ENCODE measurements at regions of chr7 and their contacts with region 1.

Region 1: DNA sequence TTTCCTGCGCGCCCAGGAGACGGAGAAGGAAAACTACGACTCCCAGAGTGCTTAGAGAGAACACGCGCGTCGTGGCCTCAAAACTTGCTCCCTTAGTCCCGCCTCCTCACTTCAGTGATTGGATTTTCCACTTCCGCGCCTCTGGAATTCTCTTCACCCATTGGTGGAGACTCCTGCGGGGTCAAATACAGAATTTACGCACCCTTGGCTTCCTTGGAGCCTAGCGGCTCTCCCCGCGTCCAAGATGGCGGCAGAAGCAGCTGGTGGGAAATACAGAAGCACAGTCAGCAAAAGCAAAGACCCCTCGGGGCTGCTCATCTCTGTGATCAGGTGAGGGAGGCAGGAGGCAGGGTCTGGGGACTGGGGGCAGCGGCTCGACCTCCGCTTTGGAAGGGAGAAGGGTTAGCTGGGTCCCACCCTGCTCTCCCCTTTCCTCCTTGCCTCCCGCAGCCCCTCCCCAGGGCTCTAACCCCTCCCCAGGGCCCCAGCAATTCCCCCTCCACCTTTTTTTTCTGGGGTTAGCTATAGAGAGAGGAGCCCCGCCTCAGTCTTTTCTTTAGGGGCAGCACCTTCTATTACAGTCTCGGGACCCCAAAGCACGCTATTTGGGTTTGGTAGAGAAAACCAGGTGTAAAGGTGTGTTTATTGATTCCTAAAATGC is at the start of gene EXOC4:
- DNase-seq: peak; percentile 82 to 88
- H3K4me3 ChIP-seq: peak within 1 kb of the TSS; percentile 59 to 95 (median 88)
- H3K27ac ChIP-seq: peak within 1 kb of the TSS; percentile 82
- H3K4me1 ChIP-seq: no peaks in the 10 kb centered on the region; a peak in 2 of 7 replicates
- H3K27me3 ChIP-seq: no peaks in the 10 kb centered on the region
- CTCF ChIP-seq: no peak
- EP300 ChIP-seq: no peak
- POLR2A ChIP-seq: peak; percentile 62 to 94
- RAD21 ChIP-seq: no peak
- total RNA-seq, gene EXOC4: 67.3 and 69.1 TPM in 2 replicates

Region 2: DNA sequence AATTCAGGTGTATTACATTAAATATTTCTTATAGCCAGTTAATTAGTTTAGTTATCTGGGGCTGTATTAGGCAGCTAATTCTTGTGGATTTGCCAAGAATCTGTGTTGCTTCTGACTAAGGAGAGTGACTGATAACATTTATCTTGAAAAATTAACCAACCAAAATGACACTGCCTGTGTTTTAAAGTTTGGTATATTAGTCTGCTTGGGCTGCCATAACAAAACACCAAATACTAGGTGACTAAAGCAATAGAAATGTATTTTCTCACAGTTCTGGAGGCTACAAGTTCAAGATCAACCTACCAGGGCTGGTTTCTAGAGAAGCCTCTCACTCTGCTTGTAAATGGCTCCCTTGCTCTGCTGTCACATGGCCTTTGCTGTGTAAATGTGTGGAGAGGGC is 12.8 kb after region 1 on chr7:
- CTCF ChIA-PET with region 1: interaction called, 3 read pairs
- POLR2A ChIA-PET with region 1: interaction called, 14 read pairs
- DNase-seq: no peak
- H3K4me3 ChIP-seq: no peak overlapping the region
- H3K27ac ChIP-seq: no peak overlapping the region
- H3K4me1 ChIP-seq: no peaks in the 10 kb centered on the region
- H3K27me3 ChIP-seq: no peaks in the 10 kb centered on the region
- CTCF ChIP-seq: no peak
- EP300 ChIP-seq: no peak
- POLR2A ChIP-seq: no peak
- RAD21 ChIP-seq: no peak

Region 3: GRCh38 chr7:133290041-133290440 is 37.1 kb after region 1 on chr7:
- CTCF ChIA-PET with region 1: no interaction called
- POLR2A ChIA-PET with region 1: no interaction called
- DNase-seq: no peak
- H3K4me3 ChIP-seq: no peak overlapping the region
- H3K27ac ChIP-seq: no peak overlapping the region
- H3K4me1 ChIP-seq: peaks cover 0 to 3% (median 1%) of the 10 kb centered on the region in 4 experiments; a peak in 1 of 7 replicates
- H3K27me3 ChIP-seq: no peaks in the 10 kb centered on the region
- CTCF ChIP-seq: no peak
- EP300 ChIP-seq: no peak
- POLR2A ChIP-seq: no peak
- RAD21 ChIP-seq: no peak

Region 4: DNA sequence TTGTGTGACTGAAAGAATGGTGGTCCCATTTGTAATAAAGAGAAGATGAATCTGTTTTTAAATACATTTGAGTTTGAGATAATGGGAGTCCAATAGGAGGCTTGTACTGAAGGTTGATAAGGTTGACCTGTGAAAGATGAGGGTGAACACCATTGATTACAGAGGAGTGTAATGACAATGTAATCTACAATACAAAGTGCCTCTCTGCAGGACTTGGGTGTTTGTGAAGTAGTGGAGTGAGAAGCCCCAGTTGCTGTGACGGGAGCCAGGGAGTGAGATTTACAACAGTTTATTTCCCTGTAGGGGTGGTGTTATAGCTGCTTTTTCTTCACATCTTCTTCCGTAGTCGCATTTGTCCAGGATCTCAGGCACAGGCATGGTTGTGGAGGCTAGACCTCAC is 189.8 kb after region 1 on chr7:
- CTCF ChIA-PET with region 1: no interaction called
- POLR2A ChIA-PET with region 1: no interaction called
- DNase-seq: no peak
- H3K4me3 ChIP-seq: no peak overlapping the region; a peak in 1 of 8 replicates
- H3K27ac ChIP-seq: no peak overlapping the region
- H3K4me1 ChIP-seq: peaks cover 0 to 8% (median 1%) of the 10 kb centered on the region in 4 experiments; a peak in 2 of 7 replicates
- H3K27me3 ChIP-seq: no peaks in the 10 kb centered on the region
- CTCF ChIP-seq: no peak
- EP300 ChIP-seq: no peak
- POLR2A ChIP-seq: no peak
- RAD21 ChIP-seq: no peak